Activated B cell treated with CpG ODN at 0.5 μM for 24 hours (primary cell): ENCODE measurements at regions of chr7 and their contacts with region 1.

Region 1: GRCh38 chr7:25894902-25895791 is 256.9 kb upstream of the NFE2L3 start:
- DNase-seq: peak; percentile 77
- ATAC-seq: peak; percentile 88
- H3K4me3 Mint-ChIP-seq: peak overlapping the region; percentile 75
- H3K27ac Mint-ChIP-seq: peak overlapping the region; percentile 62
- H3K4me1 Mint-ChIP-seq: peaks cover 32% of the 10 kb centered on the region
- H3K27me3 Mint-ChIP-seq: peaks cover 38% of the 10 kb centered on the region
- CTCF ChIP-seq: peak; percentile 36

Region 2: GRCh38 chr7:25158966-25159365 is 736.2 kb before region 1 on chr7:
- CTCF ChIA-PET with region 1: no interaction called
- POLR2A ChIA-PET with region 1: no interaction called
- intact Hi-C with region 1: no loop called
- DNase-seq: no peak
- ATAC-seq: no peak
- H3K4me3 Mint-ChIP-seq: no peak overlapping the region
- H3K27ac Mint-ChIP-seq: no peak overlapping the region
- H3K4me1 Mint-ChIP-seq: peaks cover 1% of the 10 kb centered on the region
- H3K27me3 Mint-ChIP-seq: no peaks in the 10 kb centered on the region
- CTCF ChIP-seq: no peak

Region 3: GRCh38 chr7:25854608-25855497 is 40.3 kb before region 1 on chr7:
- CTCF ChIA-PET with region 1: no interaction called
- POLR2A ChIA-PET with region 1: no interaction called
- intact Hi-C with region 1: no loop called
- DNase-seq: no peak
- ATAC-seq: no peak
- H3K4me3 Mint-ChIP-seq: no peak overlapping the region
- H3K27ac Mint-ChIP-seq: peak overlapping the region; percentile 32
- H3K4me1 Mint-ChIP-seq: peaks cover 12% of the 10 kb centered on the region
- H3K27me3 Mint-ChIP-seq: peaks cover 52% of the 10 kb centered on the region
- CTCF ChIP-seq: peak; percentile 23

Region 4: DNA sequence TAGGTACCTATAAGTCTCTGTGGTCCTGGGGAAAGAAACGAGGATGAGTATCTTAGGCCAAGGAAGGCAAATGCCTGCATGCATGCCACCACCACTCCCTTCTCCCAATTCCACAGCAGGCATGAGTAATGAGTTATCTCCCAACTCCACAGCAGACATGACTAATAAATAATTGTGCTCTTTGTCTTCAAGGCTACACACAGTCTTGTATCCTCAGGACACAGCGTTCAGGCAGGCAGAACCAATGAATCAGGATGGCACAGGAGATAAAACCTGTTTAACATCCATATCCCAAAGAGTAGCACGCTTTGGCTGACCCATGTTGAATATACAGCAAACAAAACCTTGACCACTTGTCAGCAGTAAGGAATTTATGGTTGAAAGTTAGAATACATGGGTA is 27.1 kb after region 1 on chr7:
- CTCF ChIA-PET with region 1: no interaction called
- POLR2A ChIA-PET with region 1: no interaction called
- intact Hi-C with region 1: no loop called
- DNase-seq: no peak
- ATAC-seq: no peak
- H3K4me3 Mint-ChIP-seq: no peak overlapping the region
- H3K27ac Mint-ChIP-seq: no peak overlapping the region
- H3K4me1 Mint-ChIP-seq: no peaks in the 10 kb centered on the region
- H3K27me3 Mint-ChIP-seq: peaks cover 26% of the 10 kb centered on the region
- CTCF ChIP-seq: no peak

Region 5: GRCh38 chr7:25968205-25968993 is 73.3 kb after region 1 on chr7:
- CTCF ChIA-PET with region 1: interaction called, 23 read pairs
- POLR2A ChIA-PET with region 1: interaction called, 20 read pairs
- intact Hi-C with region 1: loop called (anchors 1 kb)
- DNase-seq: peak; percentile 58
- ATAC-seq: peak; percentile 74
- H3K4me3 Mint-ChIP-seq: peak overlapping the region; percentile 58
- H3K27ac Mint-ChIP-seq: peak overlapping the region; percentile 97
- H3K4me1 Mint-ChIP-seq: peaks cover 48% of the 10 kb centered on the region
- H3K27me3 Mint-ChIP-seq: peaks cover 4% of the 10 kb centered on the region
- CTCF ChIP-seq: no peak

Region 6: GRCh38 chr7:26078437-26079336 is 183.5 kb after region 1 on chr7:
- CTCF ChIA-PET with region 1: interaction called, 29 read pairs
- POLR2A ChIA-PET with region 1: no interaction called
- intact Hi-C with region 1: loop called (anchors 5 kb)
- DNase-seq: peak; percentile 73
- ATAC-seq: peak; percentile 100
- H3K4me3 Mint-ChIP-seq: no peak overlapping the region
- H3K27ac Mint-ChIP-seq: no peak overlapping the region
- H3K4me1 Mint-ChIP-seq: peaks cover 7% of the 10 kb centered on the region
- H3K27me3 Mint-ChIP-seq: peaks cover 33% of the 10 kb centered on the region
- CTCF ChIP-seq: no peak

Region 7: DNA sequence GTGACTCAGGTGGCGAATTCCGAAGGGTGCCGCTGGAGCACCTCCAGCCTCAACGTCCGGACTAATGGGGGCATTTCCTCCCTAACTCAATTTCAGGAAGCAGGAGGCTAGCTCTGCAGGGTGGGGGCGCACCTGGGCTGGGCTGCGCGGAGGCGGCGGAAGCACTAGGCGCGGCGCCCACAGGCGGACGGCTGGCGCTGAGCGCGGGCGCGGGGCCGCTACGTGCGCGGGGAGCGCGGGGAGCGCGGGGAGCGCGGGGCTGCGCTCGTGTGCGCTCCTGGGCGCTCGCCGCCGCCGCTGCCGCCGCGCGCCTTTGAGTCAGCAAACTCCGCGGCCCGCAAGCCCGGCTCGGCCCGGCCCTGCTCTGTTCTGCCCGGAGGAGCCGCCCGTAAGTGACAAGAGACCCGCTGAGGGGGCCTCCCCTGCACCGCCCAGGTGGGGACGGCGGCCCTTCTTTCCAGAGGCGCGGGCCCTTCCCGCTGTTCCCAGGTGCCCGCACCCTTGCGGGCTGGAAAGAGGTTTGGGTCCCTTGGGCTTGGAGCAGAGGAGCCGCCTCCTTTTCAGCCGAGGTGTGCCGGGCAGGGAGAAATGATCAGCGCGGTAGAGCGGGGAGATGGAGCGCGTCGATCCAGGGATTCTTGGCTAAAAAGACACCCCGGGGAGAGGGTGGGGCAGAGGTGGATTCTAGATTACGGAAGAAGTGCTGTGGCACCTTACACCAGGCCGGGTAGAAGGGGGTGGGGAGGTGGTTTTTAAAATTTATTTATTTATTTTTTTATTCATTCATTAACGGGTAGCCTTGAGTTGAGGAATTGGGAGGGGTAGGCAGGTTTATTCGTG is 396.8 kb after region 1 on chr7 and contains the start of gene SNX10:
- CTCF ChIA-PET with region 1: interaction called, 5 read pairs
- POLR2A ChIA-PET with region 1: no interaction called
- intact Hi-C with region 1: loop called (anchors 1 kb)
- DNase-seq: peak; percentile 76
- ATAC-seq: peak; percentile 77
- H3K4me3 Mint-ChIP-seq: peak within 1 kb of the TSS; percentile 92
- H3K27ac Mint-ChIP-seq: peak within 1 kb of the TSS; percentile 95
- H3K4me1 Mint-ChIP-seq: peaks cover 51% of the 10 kb centered on the region
- H3K27me3 Mint-ChIP-seq: no peaks in the 10 kb centered on the region
- CTCF ChIP-seq: no peak
- total RNA-seq, gene SNX10: 28.9 and 32.3 TPM in 2 replicates

Region 8: DNA sequence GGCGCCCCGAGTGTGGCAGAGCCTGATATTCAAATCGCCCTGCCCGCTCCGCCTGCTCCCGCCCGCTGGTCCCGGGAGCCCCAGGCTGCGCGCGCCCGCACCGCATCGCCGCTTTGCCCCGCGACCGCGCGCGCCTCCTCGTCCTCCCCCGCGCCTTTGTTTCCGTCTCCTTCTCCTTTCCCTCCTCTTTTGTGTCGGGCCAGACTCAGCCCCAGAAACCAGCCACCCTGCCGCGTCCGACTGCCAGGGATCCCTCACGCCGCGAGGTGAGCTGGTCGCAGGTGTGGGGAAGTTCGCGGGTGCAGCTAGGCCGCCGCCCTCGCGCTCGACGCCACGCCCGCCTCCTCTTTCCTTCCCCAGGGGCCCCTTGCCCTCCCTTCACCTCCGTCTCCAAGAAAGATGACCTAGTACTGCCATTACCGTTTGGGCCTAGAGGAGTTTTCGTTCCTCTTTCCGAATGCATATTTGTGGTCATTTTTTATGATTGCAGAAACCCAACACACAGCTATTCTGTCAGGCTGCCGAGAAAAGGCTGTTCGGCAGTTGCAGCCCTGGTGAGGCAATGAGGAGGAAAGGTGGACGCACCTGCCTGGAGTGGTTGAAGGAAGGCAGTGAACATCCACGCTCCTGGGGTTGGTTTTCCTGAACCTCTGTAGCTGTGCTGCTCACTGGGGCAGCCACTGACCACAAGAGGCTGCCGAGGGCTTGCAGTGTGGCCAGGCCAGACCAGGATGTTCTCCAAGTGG is 503.8 kb after region 1 on chr7:
- CTCF ChIA-PET with region 1: interaction called, 3 read pairs
- POLR2A ChIA-PET with region 1: no interaction called
- intact Hi-C with region 1: loop called (anchors 1 kb)
- DNase-seq: peak; percentile 83
- ATAC-seq: peak; percentile 89
- H3K4me3 Mint-ChIP-seq: peak overlapping the region; percentile 98
- H3K27ac Mint-ChIP-seq: peak overlapping the region; percentile 98
- H3K4me1 Mint-ChIP-seq: peaks cover 36% of the 10 kb centered on the region
- H3K27me3 Mint-ChIP-seq: no peaks in the 10 kb centered on the region
- CTCF ChIP-seq: no peak

Region 9: GRCh38 chr7:26667500-26668133 is 772.5 kb after region 1 on chr7:
- CTCF ChIA-PET with region 1: interaction called, 11 read pairs
- POLR2A ChIA-PET with region 1: no interaction called
- intact Hi-C with region 1: loop called (anchors 1 kb)
- DNase-seq: no peak
- ATAC-seq: peak; percentile 60
- H3K4me3 Mint-ChIP-seq: no peak overlapping the region
- H3K27ac Mint-ChIP-seq: no peak overlapping the region
- H3K4me1 Mint-ChIP-seq: peaks cover 18% of the 10 kb centered on the region
- H3K27me3 Mint-ChIP-seq: no peaks in the 10 kb centered on the region
- CTCF ChIP-seq: no peak